ENCODE measurements at regions of chr13 and their contacts with region 1.

Region 1: DNA sequence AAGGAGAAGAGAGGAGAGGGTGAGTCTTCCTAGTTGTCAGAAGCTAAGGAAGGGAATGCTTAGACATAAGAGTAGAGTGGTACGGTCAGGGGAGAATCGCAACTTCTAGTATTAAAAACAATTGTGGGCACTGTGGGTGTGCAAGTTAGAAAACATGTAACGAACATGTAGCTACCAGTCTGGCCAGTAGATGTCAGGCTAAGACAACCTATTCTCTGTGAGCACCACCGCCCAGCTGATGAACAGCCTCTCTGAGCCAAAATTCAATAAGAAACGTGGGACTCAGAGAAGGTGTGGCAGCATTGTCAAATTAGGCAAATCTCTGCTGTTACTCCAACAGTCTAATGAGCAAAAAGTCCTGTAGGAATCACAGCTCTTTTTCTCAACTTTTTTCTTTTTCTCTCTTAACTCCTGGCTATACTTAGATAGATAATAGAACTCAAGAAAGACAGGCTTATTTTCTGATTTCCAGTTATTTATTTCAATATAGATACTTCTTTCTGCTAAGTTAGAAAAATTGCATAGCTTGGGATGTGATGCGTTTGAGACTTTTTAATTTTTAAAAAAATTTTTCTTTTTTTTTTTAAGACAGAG is 186.2 kb downstream of the USP12 start:
- DNase-seq: peak; percentile 81
- H3K4me3 Mint-ChIP-seq: no peak overlapping the region
- H3K27ac Mint-ChIP-seq: no peak overlapping the region
- H3K4me1 Mint-ChIP-seq: peaks cover 3% of the 10 kb centered on the region
- H3K27me3 Mint-ChIP-seq: peaks cover 8% of the 10 kb centered on the region

Region 2: GRCh38 chr13:26971990-26972887 is 13.1 kb before region 1 on chr13:
- CTCF ChIA-PET with region 1: interaction called, 22 read pairs
- DNase-seq: peak; percentile 53
- H3K4me3 Mint-ChIP-seq: no peak overlapping the region
- H3K27ac Mint-ChIP-seq: peak overlapping the region; percentile 63
- H3K4me1 Mint-ChIP-seq: no peaks in the 10 kb centered on the region
- H3K27me3 Mint-ChIP-seq: no peaks in the 10 kb centered on the region

Region 3: GRCh38 chr13:27283906-27284493 is 298.6 kb after region 1 on chr13:
- CTCF ChIA-PET with region 1: interaction called, 16 read pairs
- DNase-seq: no peak
- H3K4me3 Mint-ChIP-seq: no peak overlapping the region
- H3K27ac Mint-ChIP-seq: no peak overlapping the region
- H3K4me1 Mint-ChIP-seq: no peaks in the 10 kb centered on the region
- H3K27me3 Mint-ChIP-seq: peaks cover 5% of the 10 kb centered on the region